ENCODE measurements at regions of chr6 and their contacts with region 1.

Region 1: DNA sequence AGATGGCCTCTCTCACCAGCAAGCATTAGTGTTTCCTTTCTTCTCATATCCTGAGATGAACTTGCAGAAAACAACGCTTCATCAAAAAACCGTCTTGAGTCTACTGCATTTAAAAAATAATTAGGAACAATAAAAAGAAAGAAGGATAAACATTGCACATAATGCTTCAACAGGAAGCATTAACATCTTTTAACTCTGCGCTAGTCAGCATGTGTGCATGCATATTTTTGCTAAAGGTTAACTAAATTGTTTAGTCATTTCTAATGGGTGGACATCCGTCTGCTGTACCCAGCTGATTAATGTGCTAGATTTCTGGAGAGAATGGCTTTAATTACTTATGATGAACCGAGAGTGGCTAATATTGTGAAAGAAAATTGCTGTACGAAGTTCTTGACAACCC is 349.3 kb downstream of the SOX4 start:
- DNase-seq: no peak
- H3K4me3 ChIP-seq: no peak overlapping the region
- H3K27ac ChIP-seq: no peak overlapping the region
- H3K4me1 ChIP-seq: no peaks in the 10 kb centered on the region
- H3K27me3 ChIP-seq: no peaks in the 10 kb centered on the region
- CTCF ChIP-seq: no peak
- POLR2A ChIP-seq: no peak

Region 2: GRCh38 chr6:21987501-21987957 is 44.6 kb after region 1 on chr6:
- intact Hi-C with region 1: loop called (anchors 2 kb)
- DNase-seq: peak; percentile 55 to 71
- H3K4me3 ChIP-seq: peak overlapping the region in 2 of 3 donors; percentile 20 to 37
- H3K27ac ChIP-seq: peak overlapping the region; percentile 61 to 70
- H3K4me1 ChIP-seq: peaks cover 0 to 5% of the 10 kb centered on the region in 2 donors
- H3K27me3 ChIP-seq: no peaks in the 10 kb centered on the region
- CTCF ChIP-seq: no peak
- POLR2A ChIP-seq: no peak

Region 3: GRCh38 chr6:23477586-23477985 is 1534.7 kb after region 1 on chr6:
- intact Hi-C with region 1: no loop called
- DNase-seq: no peak
- H3K4me3 ChIP-seq: no peak overlapping the region
- H3K27ac ChIP-seq: no peak overlapping the region
- H3K4me1 ChIP-seq: no peaks in the 10 kb centered on the region
- H3K27me3 ChIP-seq: no peaks in the 10 kb centered on the region
- CTCF ChIP-seq: no peak
- POLR2A ChIP-seq: no peak